Activated CD4-positive, alpha-beta memory T cell treated with anti-CD3 and anti-CD28 coated beads for 36 hours (primary cell): ENCODE measurements at regions of chr3 and their contacts with region 1.

Region 1: DNA sequence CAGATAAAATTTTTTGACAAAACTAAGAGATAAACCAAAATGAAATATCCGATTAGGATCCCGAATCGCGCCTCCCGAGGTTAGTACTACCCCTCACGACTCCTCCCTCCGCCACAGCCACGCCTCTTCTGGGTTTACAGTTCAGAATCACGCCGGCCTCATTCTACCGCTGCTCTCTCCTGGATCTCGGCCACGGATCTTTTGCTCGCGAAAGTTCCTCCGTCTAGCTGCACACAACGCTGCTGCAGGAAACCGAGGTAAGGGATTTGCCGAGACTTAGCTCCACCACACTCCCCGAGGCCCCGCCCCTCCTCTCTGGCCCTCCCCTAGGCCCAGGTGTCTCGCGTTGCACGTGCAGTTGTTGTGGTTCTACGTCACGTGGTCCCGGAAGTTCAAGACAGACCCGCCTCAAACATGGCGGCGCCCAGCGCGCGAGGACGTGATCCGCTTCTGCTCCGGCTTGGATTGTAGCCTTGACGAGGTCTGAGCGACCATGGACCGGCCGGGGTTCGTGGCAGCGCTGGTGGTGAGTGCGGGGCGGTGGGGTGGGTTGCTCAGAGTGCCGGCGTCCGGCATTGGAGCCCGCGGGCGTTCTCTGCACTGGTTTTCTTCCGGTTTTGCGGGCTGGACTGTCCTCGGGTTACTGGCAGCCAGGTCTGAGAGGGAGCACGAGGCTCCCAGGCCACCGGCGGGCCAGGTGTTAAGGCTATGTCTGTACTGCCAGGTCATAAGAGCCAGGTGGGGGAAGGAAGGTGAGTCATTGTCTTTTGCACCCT is at the start of gene SLC25A26:
- DNase-seq: peak; percentile 98
- H3K4me3 Mint-ChIP-seq: peak within 1 kb of the TSS; percentile 90
- H3K27ac Mint-ChIP-seq: peak within 1 kb of the TSS; percentile 87
- H3K4me1 Mint-ChIP-seq: peaks cover 50% of the 10 kb centered on the region
- H3K27me3 Mint-ChIP-seq: no peaks in the 10 kb centered on the region
- total RNA-seq, gene SLC25A26: 22.6 TPM

Region 2: DNA sequence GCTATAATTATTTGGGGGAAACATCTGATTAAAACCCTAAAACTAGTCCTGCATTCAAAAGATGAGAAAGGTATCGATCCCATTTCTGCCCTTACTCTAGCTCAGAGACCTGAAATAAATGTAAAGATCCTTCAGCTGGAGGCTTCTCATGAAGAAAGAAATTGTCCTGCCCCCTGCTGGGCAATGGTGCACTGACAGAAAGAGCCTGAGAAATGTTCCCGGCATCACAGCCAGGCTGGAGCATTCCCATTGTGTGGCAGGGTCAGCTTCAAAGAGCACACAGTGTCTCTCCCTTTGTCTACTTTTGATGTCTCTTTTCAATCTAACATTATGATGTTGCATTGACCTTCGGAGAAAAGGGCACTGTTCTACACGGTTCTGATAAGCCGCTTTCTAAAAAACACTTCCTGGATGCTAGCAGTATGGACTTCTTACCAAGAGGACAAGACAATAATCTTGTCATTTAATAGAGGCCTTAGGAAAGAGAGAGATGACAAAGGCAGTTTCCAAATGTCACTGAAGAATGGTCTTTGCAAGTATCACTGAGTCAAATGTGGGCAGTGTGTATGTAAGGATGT is 469.6 kb before region 1 on chr3:
- CTCF ChIA-PET with region 1: no interaction called
- POLR2A ChIA-PET with region 1: no interaction called
- intact Hi-C with region 1: no loop called
- DNase-seq: peak; percentile 11
- H3K4me3 Mint-ChIP-seq: no peak overlapping the region
- H3K27ac Mint-ChIP-seq: no peak overlapping the region
- H3K4me1 Mint-ChIP-seq: no peaks in the 10 kb centered on the region
- H3K27me3 Mint-ChIP-seq: no peaks in the 10 kb centered on the region

Region 3: GRCh38 chr3:65963787-65964677 is 256.8 kb before region 1 on chr3:
- CTCF ChIA-PET with region 1: no interaction called
- POLR2A ChIA-PET with region 1: no interaction called
- intact Hi-C with region 1: loop called (anchors 5 kb)
- DNase-seq: peak; percentile 78
- H3K4me3 Mint-ChIP-seq: no peak overlapping the region
- H3K27ac Mint-ChIP-seq: peak overlapping the region; percentile 86
- H3K4me1 Mint-ChIP-seq: peaks cover 10% of the 10 kb centered on the region
- H3K27me3 Mint-ChIP-seq: peaks cover 7% of the 10 kb centered on the region

Region 4: DNA sequence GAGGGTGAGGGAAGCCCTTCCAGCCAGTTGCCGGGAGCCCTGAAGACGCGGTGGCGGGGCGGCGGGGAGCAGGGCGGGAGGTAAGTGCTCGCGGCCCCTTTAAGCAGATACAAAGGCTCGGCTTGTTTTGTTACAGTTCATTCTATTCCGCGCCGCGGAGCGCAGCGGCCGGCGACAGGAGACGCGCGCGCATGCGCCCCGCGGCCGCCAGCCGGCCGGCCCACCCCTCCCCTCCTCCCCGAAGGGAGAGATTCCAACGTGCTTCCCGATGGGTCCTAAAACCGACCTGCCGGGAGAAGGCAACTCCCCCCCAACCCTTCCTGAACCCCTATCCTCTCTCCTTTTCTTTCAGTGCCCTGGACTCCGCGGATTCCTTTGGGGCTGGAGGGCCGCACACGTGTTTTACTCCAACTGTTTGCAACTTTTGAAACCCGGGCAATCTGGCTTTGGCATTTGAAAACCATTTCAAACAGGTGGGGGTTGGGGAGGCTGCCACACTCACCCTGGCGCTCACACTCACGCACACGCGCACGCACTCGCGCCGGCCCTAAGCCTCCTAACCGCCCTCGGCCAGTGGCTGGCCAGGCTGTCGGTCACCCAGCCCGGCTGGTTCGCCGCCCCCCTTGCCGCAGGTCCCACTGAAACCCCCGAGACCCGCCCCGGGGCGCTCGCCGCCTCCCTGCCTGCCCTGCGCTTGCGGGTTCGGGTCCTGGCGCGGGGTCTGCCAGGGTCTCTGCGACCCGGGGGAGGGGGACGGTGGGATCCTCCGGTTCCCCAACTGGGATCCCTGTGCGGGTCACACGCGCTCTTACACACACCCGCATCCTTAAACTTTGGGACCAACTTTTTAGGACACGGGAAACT is 181.8 kb before region 1 on chr3 and contains the start of gene MAGI1:
- CTCF ChIA-PET with region 1: no interaction called
- POLR2A ChIA-PET with region 1: no interaction called
- intact Hi-C with region 1: loop called (anchors 5 kb)
- DNase-seq: peak; percentile 49
- H3K4me3 Mint-ChIP-seq: peak within 1 kb of the TSS; percentile 76
- H3K27ac Mint-ChIP-seq: no peak within 1 kb of the TSS
- H3K4me1 Mint-ChIP-seq: peaks cover 19% of the 10 kb centered on the region
- H3K27me3 Mint-ChIP-seq: peaks cover 57% of the 10 kb centered on the region
- total RNA-seq, gene MAGI1: 0.21 to 0.24 TPM

Region 5: GRCh38 chr3:66107855-66108254 is 112.9 kb before region 1 on chr3:
- CTCF ChIA-PET with region 1: no interaction called
- POLR2A ChIA-PET with region 1: no interaction called
- intact Hi-C with region 1: no loop called
- DNase-seq: no peak
- H3K4me3 Mint-ChIP-seq: no peak overlapping the region
- H3K27ac Mint-ChIP-seq: no peak overlapping the region
- H3K4me1 Mint-ChIP-seq: no peaks in the 10 kb centered on the region
- H3K27me3 Mint-ChIP-seq: peaks cover 7% of the 10 kb centered on the region

Region 6: DNA sequence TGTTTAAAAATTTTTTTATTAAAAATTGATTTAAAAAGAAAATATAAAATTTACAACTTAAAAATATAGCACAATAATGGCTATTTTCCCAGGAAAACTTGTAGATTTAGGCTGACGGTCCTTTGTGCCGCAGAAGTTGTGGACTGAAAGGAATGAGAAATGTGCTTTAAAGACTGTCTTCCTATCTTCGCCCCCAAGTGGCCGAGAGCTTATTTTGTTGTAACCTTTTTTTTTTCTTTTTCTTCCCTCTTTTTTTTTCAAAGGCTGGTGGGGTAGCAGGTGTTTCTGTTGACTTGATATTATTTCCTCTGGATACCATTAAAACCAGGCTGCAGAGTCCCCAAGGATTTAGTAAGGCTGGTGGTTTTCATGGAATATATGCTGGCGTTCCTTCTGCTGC is 15.5 kb after region 1 on chr3:
- CTCF ChIA-PET with region 1: interaction called, 4 read pairs
- POLR2A ChIA-PET with region 1: interaction called, 5 read pairs
- intact Hi-C with region 1: loop called (anchors 1 kb)
- DNase-seq: no peak
- H3K4me3 Mint-ChIP-seq: no peak overlapping the region
- H3K27ac Mint-ChIP-seq: no peak overlapping the region
- H3K4me1 Mint-ChIP-seq: peaks cover 28% of the 10 kb centered on the region
- H3K27me3 Mint-ChIP-seq: no peaks in the 10 kb centered on the region

Region 7: GRCh38 chr3:66500576-66501482 is 280.0 kb after region 1 on chr3 and contains the start of gene LRIG1:
- CTCF ChIA-PET with region 1: no interaction called
- POLR2A ChIA-PET with region 1: no interaction called
- intact Hi-C with region 1: loop called (anchors 5 kb)
- DNase-seq: peak; percentile 99
- H3K4me3 Mint-ChIP-seq: peak within 1 kb of the TSS; percentile 96
- H3K27ac Mint-ChIP-seq: peak within 1 kb of the TSS; percentile 91
- H3K4me1 Mint-ChIP-seq: peaks cover 53% of the 10 kb centered on the region
- H3K27me3 Mint-ChIP-seq: no peaks in the 10 kb centered on the region
- total RNA-seq, gene LRIG1: 35.3 to 40.4 TPM